ENCODE measurements at regions of chr19 and their contacts with region 1.

Region 1: GRCh38 chr19:57506162-57506561 is 6.4 kb downstream of the ZNF773 start:
- DNase-seq: no peak
- ATAC-seq: no peak
- H3K4me3 ChIP-seq: no peak overlapping the region
- H3K27ac ChIP-seq: no peak overlapping the region
- H3K4me1 ChIP-seq: peaks cover 0 to under 1% (median 0%) of the 10 kb centered on the region in 9 donors
- H3K27me3 ChIP-seq: no peaks in the 10 kb centered on the region
- CTCF ChIP-seq: no peak

Region 2: GRCh38 chr19:57435062-57435978 is 70.8 kb before region 1 on chr19 and contains the start of gene ZNF749:
- intact Hi-C with region 1: loop called in 1 of 10 experiments (anchors 5 kb)
- DNase-seq: peak; percentile 95 to 99
- ATAC-seq: peak; percentile 98 to 100 (median 100)
- H3K4me3 ChIP-seq: peak within 1 kb of the TSS; percentile 80 to 96 (median 88)
- H3K27ac ChIP-seq: peak within 1 kb of the TSS in 8 of 10 donors; percentile 19 to 79 (median 58)
- H3K4me1 ChIP-seq: peaks cover 8 to 23% (median 16%) of the 10 kb centered on the region in 9 donors
- H3K27me3 ChIP-seq: no peaks in the 10 kb centered on the region
- CTCF ChIP-seq: no peak
- total RNA-seq, gene ZNF749: 1.7 to 7.7 (median 2.4) TPM